Posterior vena cava (tissue), 2 donors: ENCODE measurements at regions of chr17 and their contacts with region 1.

Region 1: DNA sequence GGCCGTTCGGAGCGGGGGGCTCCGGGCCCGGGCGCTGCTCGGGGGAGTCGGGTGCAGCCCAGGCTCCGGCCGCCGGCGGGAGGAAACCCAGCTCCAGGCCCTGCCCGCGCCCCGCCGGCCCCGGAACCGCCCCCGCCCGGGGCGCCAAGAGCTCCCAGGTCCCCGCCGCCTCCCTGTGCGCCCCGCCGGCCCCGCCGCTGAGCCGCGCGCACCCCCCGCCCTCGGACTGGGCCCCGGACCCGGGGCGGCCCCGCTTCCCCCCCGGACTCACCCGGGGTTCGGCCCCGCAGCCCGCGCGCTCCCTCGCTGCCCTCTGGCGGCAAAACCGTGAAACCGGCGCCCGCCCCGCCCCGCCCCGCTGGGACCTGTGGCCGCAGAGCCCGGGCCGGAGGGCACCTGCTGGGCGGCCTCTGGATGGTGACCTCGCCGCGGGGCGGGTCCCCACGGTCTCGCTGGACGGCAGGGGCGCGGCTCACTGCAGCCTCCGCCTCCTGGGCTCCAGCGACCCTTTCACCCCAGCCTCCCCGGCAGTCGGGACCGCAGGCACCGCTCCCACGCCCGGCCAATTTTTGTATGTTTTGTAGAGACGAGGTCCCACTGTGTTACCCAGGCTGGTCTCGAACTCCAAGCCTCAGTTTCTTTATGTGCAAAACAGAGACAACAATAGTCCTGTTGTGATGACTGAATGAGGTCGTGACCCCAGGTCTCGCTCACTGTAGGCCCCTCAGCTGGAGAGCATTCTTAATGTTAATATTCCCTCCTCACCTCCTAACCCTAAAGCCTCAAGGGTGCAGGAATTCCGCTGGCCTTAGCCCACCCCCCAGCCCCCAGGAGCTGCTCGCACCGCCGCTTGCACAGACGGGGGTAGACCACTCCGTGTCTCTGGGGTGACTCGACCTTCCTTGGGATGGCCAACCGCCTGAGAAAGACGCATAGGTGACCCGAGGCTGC is 33.6 kb upstream of the RPH3AL start:
- DNase-seq: peak; percentile 96

Region 2: DNA sequence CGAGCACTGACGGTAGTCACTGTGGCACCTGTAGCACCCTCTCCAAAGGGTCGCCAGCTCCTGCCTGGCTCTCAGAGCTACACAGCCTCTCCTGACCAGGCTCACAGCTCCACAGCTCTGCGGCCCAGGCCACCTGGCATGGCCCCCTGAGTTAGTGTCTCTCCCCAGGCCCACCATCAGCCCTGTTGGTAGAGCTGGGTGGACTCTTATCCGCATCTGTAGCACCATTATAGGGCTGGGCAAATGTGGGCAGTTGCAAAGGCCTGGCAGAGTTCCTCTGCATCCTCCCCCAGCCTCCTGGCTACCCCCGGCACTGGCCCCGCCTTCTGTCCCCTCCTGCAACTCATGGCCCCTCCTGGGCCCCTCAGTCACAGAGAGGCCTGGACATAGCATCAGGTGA is 230.6 kb before region 1 on chr17:
- intact Hi-C with region 1: loop called in 1 of 2 experiments (anchors 5 kb)
- DNase-seq: peak; percentile 37